ENCODE measurements at regions of chr1 and their contacts with region 1.

Region 1: GRCh38 chr1:165073185-165074007 is 283.1 kb downstream of the LMX1A start:
- DNase-seq: no peak
- H3K4me3 ChIP-seq: no peak overlapping the region
- H3K27me3 ChIP-seq: no peaks in the 10 kb centered on the region
- CTCF ChIP-seq: peak; percentile 77

Region 2: GRCh38 chr1:163535807-163536206 is 1537.6 kb before region 1 on chr1:
- CTCF ChIA-PET with region 1: interaction called, 12 read pairs
- POLR2A ChIA-PET with region 1: no interaction called
- DNase-seq: no peak
- H3K4me3 ChIP-seq: no peak overlapping the region
- H3K27me3 ChIP-seq: no peaks in the 10 kb centered on the region
- CTCF ChIP-seq: peak; percentile 46

Region 3: GRCh38 chr1:165034136-165034809 is 39.1 kb before region 1 on chr1:
- CTCF ChIA-PET with region 1: no interaction called
- POLR2A ChIA-PET with region 1: no interaction called
- DNase-seq: no peak
- H3K4me3 ChIP-seq: no peak overlapping the region
- H3K27me3 ChIP-seq: no peaks in the 10 kb centered on the region
- CTCF ChIP-seq: no peak

Region 4: DNA sequence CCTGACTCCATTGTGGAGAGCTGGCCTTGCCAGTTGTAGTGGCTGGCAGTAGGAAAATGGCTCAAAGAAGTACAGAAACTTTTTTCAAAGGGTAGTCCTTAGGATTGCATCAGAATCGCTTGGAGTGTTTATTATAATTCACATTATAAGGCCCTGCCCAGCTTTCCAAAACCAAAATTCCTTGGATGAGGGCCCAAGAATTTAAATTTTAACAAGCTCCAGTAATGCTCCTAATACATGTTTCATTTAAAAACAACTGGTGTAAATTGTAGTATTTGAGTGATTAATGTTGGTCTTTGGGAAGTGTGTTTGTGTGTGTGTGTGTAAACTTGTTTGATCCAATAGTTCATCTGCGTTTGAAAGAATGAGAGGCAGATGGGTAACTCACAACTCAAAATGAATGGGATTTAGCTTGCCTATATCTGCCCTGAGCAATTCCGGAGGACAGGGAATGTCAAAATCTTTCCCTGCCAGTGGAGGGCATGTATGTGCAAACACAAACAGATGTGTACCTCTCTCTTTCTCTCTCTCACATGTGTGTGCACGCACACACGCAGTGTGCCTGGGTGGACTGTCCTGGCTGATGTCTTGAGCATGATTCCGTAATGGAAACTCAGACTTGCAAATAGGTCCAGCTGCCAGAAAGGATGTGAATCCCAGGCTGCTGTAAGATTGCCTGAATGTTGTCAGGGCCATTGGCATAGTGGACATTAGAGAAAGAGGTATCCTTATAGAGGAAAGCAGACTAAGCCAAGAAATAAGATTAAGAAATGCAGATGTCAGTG is 10.0 kb before region 1 on chr1:
- CTCF ChIA-PET with region 1: interaction called, 17 read pairs
- POLR2A ChIA-PET with region 1: no interaction called
- DNase-seq: peak; percentile 41
- H3K4me3 ChIP-seq: no peak overlapping the region
- H3K27me3 ChIP-seq: no peaks in the 10 kb centered on the region
- CTCF ChIP-seq: 0 out of 2 replicates have a peak, but pooled peaks have one; percentile 5

Measured in BJ (cell line).